Activated CD4-positive, alpha-beta T cell treated with anti-CD3 and anti-CD28 coated beads for 36 hours (primary cell): ENCODE measurements at regions of chr2 and their contacts with region 1.

Region 1: GRCh38 chr2:231925303-231926179 is 655 bp downstream of the NPPC start:
- DNase-seq: peak; percentile 85
- ATAC-seq: peak; percentile 54
- H3K4me3 Mint-ChIP-seq: peak overlapping the region; percentile 61
- H3K27ac Mint-ChIP-seq: no peak overlapping the region
- H3K4me1 Mint-ChIP-seq: peaks cover 5% of the 10 kb centered on the region
- H3K27me3 Mint-ChIP-seq: peaks cover 39% of the 10 kb centered on the region

Region 2: DNA sequence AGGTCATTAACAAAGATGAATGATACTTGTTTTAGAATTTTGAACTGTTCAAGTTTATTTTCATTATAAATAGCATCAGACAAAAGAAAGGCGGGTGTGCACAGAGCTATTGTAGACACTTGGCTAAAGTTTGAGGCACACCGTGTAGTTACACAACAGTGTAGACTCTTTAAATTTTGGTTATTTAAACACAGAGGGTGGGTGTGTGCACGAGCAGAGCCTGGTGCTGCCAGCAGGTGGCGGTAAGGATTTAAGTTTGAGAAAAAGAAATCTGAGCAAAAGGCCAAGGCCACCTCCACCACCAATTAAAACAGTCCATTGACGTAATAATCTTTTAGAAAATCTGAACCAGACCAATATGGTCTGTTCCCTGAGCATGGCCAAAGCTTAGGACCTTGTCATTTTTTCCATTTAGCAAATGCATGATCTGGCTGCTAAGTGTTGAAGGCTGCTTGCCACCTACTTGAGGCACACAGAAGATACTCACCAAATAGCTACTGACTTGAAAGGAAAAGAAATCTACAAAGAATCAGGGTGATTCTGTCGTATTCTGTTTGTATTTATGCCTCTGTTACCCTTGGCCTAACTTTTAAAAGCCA is 124.9 kb before region 1 on chr2:
- CTCF ChIA-PET with region 1: no interaction called
- POLR2A ChIA-PET with region 1: no interaction called
- intact Hi-C with region 1: no loop called
- DNase-seq: peak; percentile 78
- ATAC-seq: peak; percentile 69
- H3K4me3 Mint-ChIP-seq: no peak overlapping the region
- H3K27ac Mint-ChIP-seq: no peak overlapping the region
- H3K4me1 Mint-ChIP-seq: no peaks in the 10 kb centered on the region
- H3K27me3 Mint-ChIP-seq: no peaks in the 10 kb centered on the region

Region 3: DNA sequence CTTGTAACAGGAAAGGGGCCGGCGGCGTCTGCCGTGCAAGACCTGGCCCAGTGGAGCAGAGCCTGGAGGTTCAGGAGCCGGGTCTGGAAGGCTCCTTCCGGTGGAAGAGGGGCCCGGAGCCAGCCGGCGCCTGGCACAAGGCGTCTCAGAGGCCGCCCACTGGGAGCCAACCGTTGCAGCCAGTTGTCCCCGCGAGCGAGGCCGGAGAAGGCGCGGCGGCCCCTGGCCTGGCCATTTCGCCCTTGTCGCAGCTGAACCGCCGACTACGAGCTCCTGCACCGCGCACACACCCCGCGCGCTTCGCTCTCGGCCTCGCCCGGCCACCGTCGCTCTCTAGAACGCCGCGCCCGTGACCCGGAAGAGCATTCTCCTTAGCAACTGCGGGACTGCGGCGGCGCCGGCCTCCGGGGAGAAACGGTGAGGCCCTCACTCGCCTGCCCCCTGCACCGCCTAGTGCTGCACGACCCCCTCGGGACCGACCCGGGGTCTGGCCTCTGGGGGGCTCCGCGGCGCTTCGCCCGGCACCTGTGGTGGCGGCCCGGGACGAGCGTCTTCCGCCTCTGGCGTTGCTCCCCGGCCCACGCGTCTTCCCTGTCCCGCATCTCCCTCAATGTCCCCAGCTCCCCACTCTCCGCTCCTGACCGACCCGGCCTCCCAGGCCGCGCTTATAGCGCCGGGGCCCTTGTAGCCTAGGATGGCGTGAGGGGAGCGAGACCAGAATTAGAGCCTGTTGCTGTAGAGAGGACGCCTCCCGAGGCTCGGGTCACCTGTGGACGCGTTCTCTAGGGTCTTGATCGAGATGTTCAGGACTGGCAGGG is 36.0 kb after region 1 on chr2 and contains the start of gene DIS3L2:
- CTCF ChIA-PET with region 1: interaction called, 3 read pairs
- POLR2A ChIA-PET with region 1: no interaction called
- intact Hi-C with region 1: loop called in 1 of 2 experiments (anchors 2 kb)
- DNase-seq: peak; percentile 91
- ATAC-seq: peak; percentile 94
- H3K4me3 Mint-ChIP-seq: peak within 1 kb of the TSS; percentile 90
- H3K27ac Mint-ChIP-seq: peak within 1 kb of the TSS; percentile 96
- H3K4me1 Mint-ChIP-seq: peaks cover 41% of the 10 kb centered on the region
- H3K27me3 Mint-ChIP-seq: peaks cover under 1% of the 10 kb centered on the region
- total RNA-seq, gene DIS3L2: 25.6 to 34.5 TPM

Region 4: GRCh38 chr2:232085179-232085578 is 159.6 kb after region 1 on chr2:
- CTCF ChIA-PET with region 1: no interaction called
- POLR2A ChIA-PET with region 1: no interaction called
- intact Hi-C with region 1: no loop called
- DNase-seq: no peak
- ATAC-seq: no peak
- H3K4me3 Mint-ChIP-seq: no peak overlapping the region
- H3K27ac Mint-ChIP-seq: no peak overlapping the region
- H3K4me1 Mint-ChIP-seq: peaks cover 1% of the 10 kb centered on the region
- H3K27me3 Mint-ChIP-seq: no peaks in the 10 kb centered on the region

Region 5: GRCh38 chr2:232230557-232230956 is 305.0 kb after region 1 on chr2:
- CTCF ChIA-PET with region 1: no interaction called
- POLR2A ChIA-PET with region 1: no interaction called
- intact Hi-C with region 1: loop called (anchors 2 to 10 kb)
- DNase-seq: peak; percentile 66
- ATAC-seq: peak; percentile 64
- H3K4me3 Mint-ChIP-seq: no peak overlapping the region
- H3K27ac Mint-ChIP-seq: no peak overlapping the region
- H3K4me1 Mint-ChIP-seq: peaks cover 20% of the 10 kb centered on the region
- H3K27me3 Mint-ChIP-seq: no peaks in the 10 kb centered on the region

Region 6: GRCh38 chr2:232438951-232439757 is 513.6 kb after region 1 on chr2:
- CTCF ChIA-PET with region 1: interaction called, 3 read pairs
- POLR2A ChIA-PET with region 1: no interaction called
- intact Hi-C with region 1: loop called in 1 of 2 experiments (anchors 1 kb)
- DNase-seq: peak; percentile 65
- ATAC-seq: peak; percentile 55
- H3K4me3 Mint-ChIP-seq: no peak overlapping the region
- H3K27ac Mint-ChIP-seq: no peak overlapping the region
- H3K4me1 Mint-ChIP-seq: peaks cover 3% of the 10 kb centered on the region
- H3K27me3 Mint-ChIP-seq: peaks cover 2% of the 10 kb centered on the region